OCI-LY7 (cell line): ENCODE measurements at regions of chr19 and their contacts with region 1.

Region 1: GRCh38 chr19:45677351-45678230 is 9.6 kb downstream of the GIPR start:
- DNase-seq: peak; percentile 92
- H3K4me3 ChIP-seq: peak overlapping the region; percentile 64
- H3K27ac ChIP-seq: no peak overlapping the region
- H3K4me1 ChIP-seq: peaks cover 26% of the 10 kb centered on the region
- CTCF ChIP-seq: peak; percentile 60; the same call in 1 of the 2 replicates

Region 2: DNA sequence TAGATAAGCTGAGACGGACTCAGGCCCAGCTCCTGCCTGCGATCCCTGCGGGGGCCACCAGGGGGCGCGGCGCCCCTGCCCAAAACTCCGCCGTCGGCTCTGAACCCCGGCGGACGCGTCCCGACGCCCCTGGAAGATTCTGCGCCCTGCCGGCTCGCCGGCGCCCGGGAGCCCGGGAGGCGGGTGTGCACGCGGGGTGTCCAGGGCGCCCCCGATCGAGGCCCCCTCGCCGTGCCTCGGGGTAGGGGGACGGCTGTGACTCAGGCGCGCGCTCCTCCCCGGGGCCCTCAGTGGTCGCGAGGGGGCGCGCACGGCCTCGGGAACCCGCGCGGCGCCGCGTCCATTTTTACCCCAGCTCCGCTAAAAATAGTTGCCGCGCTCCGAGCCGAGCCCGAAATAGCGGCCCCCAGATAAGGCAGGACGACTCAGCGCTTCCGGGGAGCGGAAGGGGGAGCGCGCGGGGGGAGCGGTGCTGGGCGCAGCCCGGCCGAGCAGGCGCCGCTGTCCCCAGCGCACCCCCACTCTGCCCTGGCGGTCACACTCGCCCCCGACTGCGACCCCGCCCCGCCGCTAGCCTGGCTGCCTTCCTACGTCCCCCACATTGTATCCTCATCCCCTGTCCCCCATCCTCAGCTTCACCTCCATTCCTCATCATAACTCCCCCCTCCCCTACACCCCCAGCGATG is 237.9 kb before region 1 on chr19:
- CTCF ChIA-PET with region 1: no interaction called
- POLR2A ChIA-PET with region 1: no interaction called
- intact Hi-C with region 1: no loop called
- DNase-seq: peak; percentile 89
- H3K4me3 ChIP-seq: peak overlapping the region; percentile 69
- H3K27ac ChIP-seq: peak overlapping the region; percentile 58
- H3K4me1 ChIP-seq: peaks cover 37% of the 10 kb centered on the region
- CTCF ChIP-seq: peak; percentile 99

Region 3: GRCh38 chr19:45485305-45486077 is 192.1 kb before region 1 on chr19:
- CTCF ChIA-PET with region 1: interaction called, 17 read pairs
- POLR2A ChIA-PET with region 1: no interaction called
- intact Hi-C with region 1: no loop called
- DNase-seq: peak; percentile 99
- H3K4me3 ChIP-seq: peak overlapping the region; percentile 72
- H3K27ac ChIP-seq: no peak overlapping the region
- H3K4me1 ChIP-seq: peaks cover 9% of the 10 kb centered on the region
- CTCF ChIP-seq: peak; percentile 76

Region 4: GRCh38 chr19:45663800-45664199 is 13.8 kb before region 1 on chr19:
- CTCF ChIA-PET with region 1: interaction called, 10 read pairs
- POLR2A ChIA-PET with region 1: interaction called, 4 read pairs
- intact Hi-C with region 1: no loop called
- DNase-seq: no peak
- H3K4me3 ChIP-seq: no peak overlapping the region
- H3K27ac ChIP-seq: no peak overlapping the region
- H3K4me1 ChIP-seq: peaks cover 35% of the 10 kb centered on the region
- CTCF ChIP-seq: no peak

Region 5: GRCh38 chr19:45753546-45753945 is 76.0 kb after region 1 on chr19:
- CTCF ChIA-PET with region 1: no interaction called
- POLR2A ChIA-PET with region 1: no interaction called
- intact Hi-C with region 1: no loop called
- DNase-seq: peak; percentile 47
- H3K4me3 ChIP-seq: no peak overlapping the region
- H3K27ac ChIP-seq: no peak overlapping the region
- H3K4me1 ChIP-seq: peaks cover 3% of the 10 kb centered on the region
- CTCF ChIP-seq: peak; percentile 73